Posterior vena cava (tissue), 2 donors: ENCODE measurements at regions of chr18 and their contacts with region 1.

Region 1: DNA sequence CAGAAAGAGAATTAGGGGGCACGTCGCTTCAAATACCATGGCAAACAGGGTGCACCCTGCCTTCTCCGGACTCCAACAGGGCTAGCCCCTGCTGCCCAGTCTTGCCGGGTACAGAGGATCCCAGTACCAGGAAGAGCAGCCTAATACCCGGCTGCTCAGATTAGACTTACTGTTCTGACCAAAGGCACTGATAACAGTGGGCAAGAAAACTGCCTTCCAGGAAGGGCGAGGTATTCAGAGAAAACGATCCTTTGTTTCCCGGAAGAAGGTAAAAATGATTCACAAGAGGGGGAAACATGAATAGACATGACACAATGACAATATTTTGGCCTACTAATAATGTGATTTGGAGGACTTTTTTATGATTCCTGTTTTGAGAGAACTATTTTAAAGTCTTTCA is 99.9 kb downstream of the SS18 start:
- DNase-seq: no peak

Region 2: DNA sequence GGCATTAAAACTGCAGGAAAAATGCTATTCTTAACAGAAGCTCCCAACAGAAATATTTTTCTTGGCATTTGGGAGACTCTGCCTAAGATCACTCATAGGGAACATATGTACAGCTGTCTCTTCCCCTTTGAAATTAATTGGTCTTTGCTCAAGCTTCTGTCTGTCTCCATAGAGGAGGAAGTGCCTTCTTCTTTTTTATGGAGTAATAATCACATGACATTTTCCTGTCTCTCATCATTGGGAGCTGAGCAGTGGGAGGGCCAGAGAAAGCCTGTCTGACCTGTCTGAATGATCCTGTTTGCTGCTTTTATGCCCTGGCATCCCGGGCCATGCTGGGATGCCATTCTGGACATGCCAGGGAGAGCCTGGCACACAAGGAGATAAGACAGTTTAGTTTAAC is 729.4 kb after region 1 on chr18:
- intact Hi-C with region 1: loop called in 1 of 2 experiments (anchors 5 kb)
- DNase-seq: no peak